ENCODE measurements at regions of chr3 and their contacts with region 1.

Region 1: GRCh38 chr3:36957862-36958686 is 13.2 kb upstream of the TRANK1 start:
- DNase-seq: no peak
- H3K4me3 ChIP-seq: no peak overlapping the region
- H3K27ac ChIP-seq: no peak overlapping the region
- H3K4me1 ChIP-seq: peaks cover 0 to 2% (median 0%) of the 10 kb centered on the region in 4 experiments; a peak in 2 of 7 replicates
- H3K27me3 ChIP-seq: no peaks in the 10 kb centered on the region
- CTCF ChIP-seq: no peak
- EP300 ChIP-seq: no peak
- POLR2A ChIP-seq: no peak
- RAD21 ChIP-seq: no peak

Region 2: GRCh38 chr3:36852071-36852470 is 106.0 kb before region 1 on chr3:
- CTCF ChIA-PET with region 1: interaction called, 11 read pairs
- POLR2A ChIA-PET with region 1: no interaction called
- DNase-seq: no peak
- H3K4me3 ChIP-seq: no peak overlapping the region
- H3K27ac ChIP-seq: no peak overlapping the region
- H3K4me1 ChIP-seq: no peaks in the 10 kb centered on the region
- H3K27me3 ChIP-seq: no peaks in the 10 kb centered on the region
- CTCF ChIP-seq: no peak
- EP300 ChIP-seq: no peak
- POLR2A ChIP-seq: no peak
- RAD21 ChIP-seq: no peak

Region 3: GRCh38 chr3:36893137-36893557 is 64.9 kb before region 1 on chr3:
- CTCF ChIA-PET with region 1: interaction called, 24 read pairs
- POLR2A ChIA-PET with region 1: no interaction called
- DNase-seq: peak in 1 of 2 experiments; percentile 22
- H3K4me3 ChIP-seq: no peak overlapping the region
- H3K27ac ChIP-seq: no peak overlapping the region
- H3K4me1 ChIP-seq: no peaks in the 10 kb centered on the region
- H3K27me3 ChIP-seq: no peaks in the 10 kb centered on the region
- CTCF ChIP-seq: no peak
- EP300 ChIP-seq: no peak
- POLR2A ChIP-seq: no peak
- RAD21 ChIP-seq: no peak

Region 4: GRCh38 chr3:36918050-36918449 is 40.0 kb before region 1 on chr3:
- CTCF ChIA-PET with region 1: interaction called, 62 read pairs
- POLR2A ChIA-PET with region 1: no interaction called
- DNase-seq: no peak
- H3K4me3 ChIP-seq: no peak overlapping the region
- H3K27ac ChIP-seq: no peak overlapping the region
- H3K4me1 ChIP-seq: no peaks in the 10 kb centered on the region
- H3K27me3 ChIP-seq: no peaks in the 10 kb centered on the region
- CTCF ChIP-seq: no peak
- EP300 ChIP-seq: no peak
- POLR2A ChIP-seq: no peak
- RAD21 ChIP-seq: no peak

Region 5: GRCh38 chr3:36933540-36934296 is 24.4 kb before region 1 on chr3:
- CTCF ChIA-PET with region 1: interaction called, 50 read pairs
- POLR2A ChIA-PET with region 1: no interaction called
- DNase-seq: no peak
- H3K4me3 ChIP-seq: no peak overlapping the region
- H3K27ac ChIP-seq: peak overlapping the region; percentile 87
- H3K4me1 ChIP-seq: peaks cover 3 to 12% (median 9%) of the 10 kb centered on the region in 4 experiments; a peak in 6 of 7 replicates
- H3K27me3 ChIP-seq: no peaks in the 10 kb centered on the region
- CTCF ChIP-seq: no peak
- EP300 ChIP-seq: no peak
- POLR2A ChIP-seq: no peak
- RAD21 ChIP-seq: no peak

Region 6: GRCh38 chr3:36969540-36970432 is 11.7 kb after region 1 on chr3:
- CTCF ChIA-PET with region 1: interaction called, 27 read pairs
- POLR2A ChIA-PET with region 1: no interaction called
- DNase-seq: no peak
- H3K4me3 ChIP-seq: no peak overlapping the region
- H3K27ac ChIP-seq: no peak overlapping the region
- H3K4me1 ChIP-seq: peaks cover 0 to 15% (median 8%) of the 10 kb centered on the region in 4 experiments; a peak in 5 of 7 replicates
- H3K27me3 ChIP-seq: no peaks in the 10 kb centered on the region
- CTCF ChIP-seq: no peak
- EP300 ChIP-seq: no peak
- POLR2A ChIP-seq: no peak
- RAD21 ChIP-seq: no peak

Region 7: GRCh38 chr3:37015642-37016041 is 57.6 kb after region 1 on chr3:
- CTCF ChIA-PET with region 1: no interaction called
- POLR2A ChIA-PET with region 1: no interaction called
- DNase-seq: no peak
- H3K4me3 ChIP-seq: no peak overlapping the region
- H3K27ac ChIP-seq: no peak overlapping the region
- H3K4me1 ChIP-seq: no peaks in the 10 kb centered on the region; a peak in 1 of 7 replicates
- H3K27me3 ChIP-seq: no peaks in the 10 kb centered on the region
- CTCF ChIP-seq: no peak
- EP300 ChIP-seq: no peak
- POLR2A ChIP-seq: no peak
- RAD21 ChIP-seq: no peak

Measured in H1 (cell line).